ENCODE measurements at regions of chr15 and their contacts with region 1.

Region 1: DNA sequence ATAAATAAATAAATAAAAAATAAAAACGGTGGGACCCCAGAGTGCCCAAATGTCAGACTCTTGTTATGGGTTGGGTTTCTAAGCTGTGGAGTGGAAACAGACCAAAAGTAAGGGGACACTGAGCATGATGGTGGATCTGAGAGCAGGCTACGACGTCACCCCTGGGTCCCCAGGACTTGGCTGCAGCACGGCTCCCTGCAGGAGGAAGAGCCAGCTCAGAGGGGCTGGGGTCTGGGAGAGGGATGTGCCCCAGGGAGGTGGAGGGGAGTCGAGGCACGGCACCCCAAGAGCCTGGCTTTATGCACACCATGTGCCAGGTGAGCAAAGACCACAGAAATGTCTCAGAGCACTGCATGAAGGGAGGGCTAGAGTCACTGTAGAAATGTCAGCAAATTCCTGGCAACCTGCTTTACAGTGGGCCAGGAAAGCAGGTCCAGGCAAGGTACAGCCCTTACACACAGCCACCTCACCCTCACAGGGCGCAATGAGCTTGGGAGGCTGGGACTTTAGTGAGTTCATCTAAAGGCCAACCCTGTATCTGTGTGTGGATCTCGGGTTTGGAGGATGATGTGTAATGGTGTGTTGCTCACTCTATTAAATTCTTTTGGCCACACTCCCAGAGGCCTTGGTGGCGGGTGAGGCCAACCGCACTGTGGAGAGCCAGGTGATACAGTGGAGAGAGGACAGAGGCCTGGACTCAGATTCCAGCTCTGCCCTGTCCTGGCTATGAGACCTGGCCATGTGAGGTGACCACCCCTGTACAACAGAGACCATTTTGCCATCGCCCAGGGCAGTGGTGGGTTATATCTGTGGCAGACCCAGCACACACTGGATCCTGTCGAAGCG is 14.1 kb downstream of the CTSH start:
- DNase-seq: no peak
- ATAC-seq: no peak
- H3K4me3 Mint-ChIP-seq: no peak overlapping the region
- H3K27ac Mint-ChIP-seq: peak overlapping the region; percentile 53
- H3K4me1 Mint-ChIP-seq: peaks cover 8% of the 10 kb centered on the region
- H3K27me3 Mint-ChIP-seq: no peaks in the 10 kb centered on the region
- CTCF ChIP-seq: no peak

Region 2: DNA sequence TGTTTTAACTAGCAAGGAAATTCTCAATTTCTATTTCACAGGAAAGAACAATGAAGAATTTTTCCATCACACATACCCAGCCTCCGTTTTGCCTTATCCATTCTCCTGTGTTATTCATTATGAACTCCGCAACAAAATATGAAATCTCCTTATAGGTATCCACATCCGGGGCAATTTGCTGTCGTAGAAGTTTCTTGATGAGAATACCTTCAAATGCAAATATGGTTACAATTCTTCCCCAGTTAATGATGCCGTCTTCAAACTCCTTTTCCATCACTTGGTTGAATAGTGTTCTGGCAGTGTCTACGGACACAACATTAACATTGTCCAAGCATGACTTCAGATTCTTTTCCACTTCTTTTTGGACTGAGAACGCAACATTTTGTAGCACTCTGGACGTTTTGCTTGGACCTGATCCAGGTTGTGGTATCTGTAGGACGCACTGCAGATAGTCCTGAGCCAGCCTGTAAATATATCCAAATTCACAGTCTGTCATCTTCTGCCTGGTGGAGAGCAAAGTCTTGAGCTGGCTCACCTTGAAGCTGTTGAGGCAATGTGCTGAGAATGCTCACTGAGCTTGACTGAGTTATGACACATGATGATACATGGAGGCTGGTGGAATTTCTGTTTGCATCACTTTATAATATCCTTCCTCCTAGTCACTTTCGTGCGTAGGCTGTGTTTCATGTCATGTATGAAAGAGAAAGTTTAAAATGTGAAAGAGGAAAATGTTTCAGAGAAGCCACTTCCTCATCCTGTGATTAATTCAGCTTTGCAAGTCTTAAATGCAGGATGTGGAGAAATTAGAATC is 1040.0 kb after region 1 on chr15 and contains the start of gene BCL2A1:
- CTCF ChIA-PET with region 1: no interaction called
- POLR2A ChIA-PET with region 1: no interaction called
- intact Hi-C with region 1: loop called (anchors 10 kb)
- DNase-seq: peak; percentile 33
- ATAC-seq: peak; percentile 83
- H3K4me3 Mint-ChIP-seq: peak within 1 kb of the TSS; percentile 89
- H3K27ac Mint-ChIP-seq: peak within 1 kb of the TSS; percentile 93
- H3K4me1 Mint-ChIP-seq: peaks cover 61% of the 10 kb centered on the region
- H3K27me3 Mint-ChIP-seq: no peaks in the 10 kb centered on the region
- CTCF ChIP-seq: no peak
- total RNA-seq, gene BCL2A1: 181 and 189 TPM in 2 replicates

Measured in activated B cell treated with CpG ODN at 0.5 μM for 24 hours (primary cell).